Esophagus squamous epithelium (tissue), 5 donors: ENCODE measurements at regions of chr15 and their contacts with region 1.

Region 1: GRCh38 chr15:100633763-100634075 is 31.3 kb downstream of the ASB7 start:
- DNase-seq: no peak
- H3K4me3 ChIP-seq: no peak overlapping the region
- H3K27ac ChIP-seq: no peak overlapping the region
- H3K4me1 ChIP-seq: peaks cover 0 to 12% (median 4%) of the 10 kb centered on the region in 3 donors
- H3K27me3 ChIP-seq: no peaks in the 10 kb centered on the region
- CTCF ChIP-seq: no peak
- POLR2A ChIP-seq: no peak

Region 2: GRCh38 chr15:100341662-100342560 is 291.8 kb before region 1 on chr15 and contains the start of gene ADAMTS17:
- intact Hi-C with region 1: no loop called
- DNase-seq: peak; percentile 66
- H3K4me3 ChIP-seq: peak within 1 kb of the TSS; percentile 65 to 89 (median 84)
- H3K27ac ChIP-seq: peak within 1 kb of the TSS; percentile 84 to 91 (median 88)
- H3K4me1 ChIP-seq: peaks cover 4 to 35% (median 7%) of the 10 kb centered on the region in 3 donors
- H3K27me3 ChIP-seq: peaks cover 0 to 15% (median 0%) of the 10 kb centered on the region in 4 donors
- CTCF ChIP-seq: peak; percentile 78 to 97 (median 95)
- POLR2A ChIP-seq: peak in 3 of 4 donors; percentile 89 to 96 (median 93)
- total RNA-seq, gene ADAMTS17: 4.5 to 11.4 (median 6.6) TPM

Region 3: GRCh38 chr15:100873029-100873677 is 239.4 kb after region 1 on chr15:
- intact Hi-C with region 1: loop called (anchors 5 kb)
- DNase-seq: no peak
- H3K4me3 ChIP-seq: no peak overlapping the region
- H3K27ac ChIP-seq: peak overlapping the region in 1 of 4 donors; percentile 32
- H3K4me1 ChIP-seq: peaks cover 0 to 11% (median 3%) of the 10 kb centered on the region in 3 donors
- H3K27me3 ChIP-seq: peaks cover 0 to 10% (median 0%) of the 10 kb centered on the region in 4 donors
- CTCF ChIP-seq: peak; percentile 90 to 96 (median 93)
- POLR2A ChIP-seq: no peak